ENCODE measurements at regions of chr1 and their contacts with region 1.

Region 1: DNA sequence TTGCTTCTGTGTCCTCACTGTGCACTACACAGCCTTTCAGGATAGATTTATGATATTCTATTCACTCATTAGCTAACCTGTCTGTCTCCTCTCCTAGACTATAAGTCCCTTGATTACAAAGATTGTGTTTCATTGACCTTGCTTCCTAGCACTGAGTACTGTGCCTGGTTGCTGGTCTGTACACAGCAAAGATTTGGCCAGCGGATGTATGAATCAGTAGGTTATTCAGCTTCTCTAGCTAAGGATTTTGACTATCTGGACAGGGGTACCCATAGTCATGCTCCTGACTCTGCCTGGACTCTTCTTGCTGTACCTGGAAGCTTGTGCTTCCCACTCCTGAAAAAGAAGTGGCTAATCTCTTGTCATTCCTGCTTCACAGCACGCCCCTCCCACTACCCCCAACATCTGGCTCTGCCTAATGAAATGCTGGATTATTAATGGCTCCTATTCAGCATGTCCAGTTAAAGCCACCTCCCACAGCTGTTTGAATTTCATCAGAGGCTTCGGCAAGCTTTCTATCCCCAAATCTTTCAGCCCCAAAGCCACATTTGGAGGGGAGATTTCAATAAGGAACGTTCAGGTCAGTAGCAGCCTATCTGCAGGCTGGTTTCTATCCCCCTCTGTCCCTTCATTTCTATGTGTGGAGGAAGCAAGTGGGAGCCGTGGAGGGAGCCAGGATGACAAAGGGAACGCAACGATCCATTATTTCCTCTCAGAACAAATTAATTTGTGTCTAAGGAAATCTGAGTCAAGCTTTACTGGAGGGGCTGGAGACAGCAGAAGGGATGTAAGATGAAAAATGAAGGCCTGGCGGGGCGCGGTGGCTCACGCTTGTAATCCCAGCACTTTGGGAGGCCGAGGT is 64.8 kb upstream of the PPM1J start:
- DNase-seq: no peak
- H3K4me3 ChIP-seq: no peak overlapping the region
- CTCF ChIP-seq: no peak

Region 2: DNA sequence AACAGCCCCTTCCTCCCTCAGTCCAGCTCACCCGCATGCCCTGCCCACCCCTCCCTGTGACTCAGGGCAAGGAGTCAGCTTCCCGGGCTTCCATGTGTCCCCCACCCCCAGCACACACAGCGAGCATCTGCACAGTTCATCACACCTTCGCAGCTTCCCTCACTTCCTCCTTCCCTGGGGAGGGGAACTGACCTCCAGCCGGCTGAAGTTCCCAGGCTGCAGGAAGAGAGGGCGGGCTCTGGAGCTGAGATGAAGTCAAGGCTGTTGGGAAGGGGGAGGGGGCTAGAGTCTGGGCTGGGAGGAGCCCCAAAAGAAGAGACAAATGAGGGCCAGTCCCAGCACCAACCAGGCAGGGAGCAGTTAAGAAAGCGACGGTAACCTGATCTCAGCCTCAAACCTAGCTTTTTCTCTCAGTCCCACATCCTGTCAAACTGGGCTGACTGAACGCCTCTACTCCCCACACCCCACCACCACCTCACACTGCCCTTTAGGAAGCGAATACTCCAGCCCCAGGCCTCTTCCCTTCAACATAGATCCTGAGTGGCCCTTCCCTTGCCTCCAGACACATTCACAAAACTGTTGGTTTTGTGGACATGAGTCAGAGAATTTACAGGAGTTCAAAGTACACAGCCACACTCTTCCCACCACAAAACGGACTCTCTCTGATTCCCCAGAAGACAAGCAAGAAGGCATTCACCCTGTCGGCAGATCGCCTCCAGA is 74.8 kb before region 1 on chr1:
- in situ Hi-C with region 1: no loop called
- DNase-seq: peak; percentile 88
- H3K4me3 ChIP-seq: peak overlapping the region; percentile 92
- CTCF ChIP-seq: no peak

Region 3: GRCh38 chr1:112715264-112716053 is 64.4 kb before region 1 on chr1 and contains the start of gene PPM1J:
- in situ Hi-C with region 1: no loop called
- DNase-seq: peak; percentile 50
- H3K4me3 ChIP-seq: peak within 1 kb of the TSS; percentile 60
- CTCF ChIP-seq: no peak

Region 4: DNA sequence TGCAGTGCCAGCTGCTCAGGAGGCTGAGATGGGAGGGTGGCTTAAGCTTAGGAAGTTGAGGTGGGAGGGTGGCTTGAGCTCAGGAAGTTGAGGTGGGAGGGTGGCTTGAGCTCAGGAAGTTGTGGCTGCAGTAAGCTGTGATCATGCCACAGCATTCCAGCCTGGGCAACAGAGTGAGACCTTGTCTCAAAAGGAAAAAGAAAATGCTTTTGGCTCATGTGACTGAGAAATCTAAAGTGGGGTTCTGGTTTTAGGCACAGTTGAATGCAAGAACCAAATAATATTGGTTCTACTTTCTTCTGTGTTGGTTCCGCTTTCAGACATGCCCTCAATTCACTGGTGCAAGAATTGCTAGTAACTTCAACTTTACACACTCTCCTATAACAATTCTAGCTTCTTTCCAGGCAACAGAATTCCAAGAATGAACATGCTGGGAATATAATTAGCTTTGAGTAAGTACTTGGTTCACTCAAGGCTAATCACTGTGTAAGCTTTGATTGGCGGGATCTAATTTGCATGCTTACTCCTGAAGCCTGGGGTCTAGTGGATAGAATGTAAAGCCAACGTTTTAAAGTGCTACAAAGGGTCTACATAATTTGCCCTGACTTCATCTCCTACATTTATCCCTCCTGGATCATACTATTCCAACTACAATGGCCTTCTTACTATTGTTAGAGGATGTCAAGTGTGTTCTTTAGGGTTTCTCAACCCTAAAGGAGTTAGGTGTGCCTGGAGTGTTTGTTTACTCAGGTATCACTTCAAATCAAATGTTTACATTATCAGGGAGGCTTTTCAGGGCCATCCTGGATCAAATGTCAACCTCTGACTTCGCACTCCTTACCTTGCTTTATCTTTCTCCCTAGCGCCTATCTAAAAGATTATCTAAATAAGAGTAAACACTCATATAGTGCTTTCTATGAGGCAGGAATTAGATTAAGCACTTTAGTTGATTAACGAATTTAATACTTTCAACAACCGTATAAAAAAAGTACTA is 61.0 kb after region 1 on chr1:
- in situ Hi-C with region 1: loop called (anchors 5 kb)
- DNase-seq: no peak
- H3K4me3 ChIP-seq: no peak overlapping the region
- CTCF ChIP-seq: no peak

Measured in astrocyte of the cerebellum (primary cell).